ENCODE measurements at regions of chr1 and their contacts with region 1.

Region 1: DNA sequence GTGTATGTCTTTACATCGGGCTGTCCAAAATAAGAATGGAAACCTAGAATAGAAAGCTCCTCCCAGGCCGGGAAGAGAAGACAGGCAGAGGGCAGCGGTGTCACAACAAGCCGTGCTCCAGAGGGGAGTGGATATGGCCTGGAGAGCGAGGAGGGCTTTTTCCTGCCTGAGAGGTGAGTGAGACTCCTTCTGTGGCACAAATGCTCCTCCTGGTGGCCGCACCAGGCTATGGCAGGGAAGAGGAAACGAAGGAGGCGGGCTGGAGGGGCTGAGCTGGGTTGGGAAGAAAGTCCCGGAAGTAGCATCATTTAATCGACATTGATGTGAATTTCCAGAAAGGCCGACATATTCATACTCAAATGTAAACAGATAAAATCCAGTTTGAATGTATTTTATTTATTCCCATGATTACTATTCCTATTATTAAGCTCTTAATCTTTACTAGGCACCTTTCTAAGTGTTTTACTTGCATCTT is 54.7 kb downstream of the MEF2D start:
- DNase-seq: peak; percentile 87
- ATAC-seq: peak; percentile 93
- H3K4me3 Mint-ChIP-seq: peak overlapping the region; percentile 4
- H3K27ac Mint-ChIP-seq: no peak overlapping the region
- H3K4me1 Mint-ChIP-seq: peaks cover 20% of the 10 kb centered on the region
- H3K27me3 Mint-ChIP-seq: peaks cover 45% of the 10 kb centered on the region
- CTCF ChIP-seq: peak; percentile 99

Region 2: GRCh38 chr1:155688324-155689080 is 757.3 kb before region 1 on chr1 and contains the start of gene YY1AP1:
- CTCF ChIA-PET with region 1: no interaction called
- POLR2A ChIA-PET with region 1: no interaction called
- intact Hi-C with region 1: no loop called
- DNase-seq: peak; percentile 90
- ATAC-seq: peak; percentile 83
- H3K4me3 Mint-ChIP-seq: peak within 1 kb of the TSS; percentile 98
- H3K27ac Mint-ChIP-seq: peak within 1 kb of the TSS; percentile 98
- H3K4me1 Mint-ChIP-seq: peaks cover 61% of the 10 kb centered on the region
- H3K27me3 Mint-ChIP-seq: no peaks in the 10 kb centered on the region
- CTCF ChIP-seq: no peak
- total RNA-seq, gene YY1AP1: 56.2 to 60.5 TPM

Region 3: DNA sequence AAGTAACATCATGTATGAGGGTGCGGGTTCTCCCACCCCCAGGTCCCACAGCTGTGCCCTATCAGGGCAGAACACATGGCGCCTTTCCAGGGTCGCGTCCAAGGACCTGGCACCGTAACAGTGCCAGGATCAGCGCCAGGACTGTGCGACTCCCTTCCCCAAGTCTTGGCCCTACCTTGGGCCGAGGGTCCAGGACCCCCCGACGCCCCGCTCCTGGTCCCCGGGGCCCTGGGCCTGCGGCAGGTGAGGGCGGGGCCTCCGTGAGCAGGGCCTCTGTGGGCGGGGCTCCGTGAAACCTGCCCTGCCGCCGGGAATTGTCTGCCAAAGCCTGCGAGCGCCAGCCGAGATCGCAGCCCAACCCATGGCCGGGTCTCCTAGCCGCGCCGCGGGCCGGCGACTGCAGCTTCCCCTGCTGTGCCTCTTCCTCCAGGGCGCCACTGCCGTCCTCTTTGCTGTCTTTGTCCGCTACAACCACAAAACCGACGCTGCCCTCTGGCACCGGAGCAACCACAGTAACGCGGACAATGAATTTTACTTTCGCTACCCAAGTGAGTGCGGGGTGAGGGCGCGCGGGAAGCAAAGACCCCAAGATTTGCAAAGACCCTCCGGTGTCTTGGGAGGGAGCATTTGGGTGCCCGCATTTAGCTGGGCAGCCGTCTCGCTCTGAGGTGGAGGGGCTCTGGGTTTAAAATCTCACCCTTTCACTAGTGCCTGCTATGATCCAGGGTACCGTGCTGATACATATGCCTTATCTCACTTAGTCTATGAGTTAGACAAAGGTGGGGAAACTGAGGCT is 76.7 kb before region 1 on chr1 and contains the start of gene RHBG:
- CTCF ChIA-PET with region 1: interaction called, 26 read pairs
- POLR2A ChIA-PET with region 1: no interaction called
- intact Hi-C with region 1: no loop called
- DNase-seq: peak; percentile 19
- ATAC-seq: peak; percentile 45
- H3K4me3 Mint-ChIP-seq: peak within 1 kb of the TSS; percentile 7
- H3K27ac Mint-ChIP-seq: no peak within 1 kb of the TSS
- H3K4me1 Mint-ChIP-seq: peaks cover 2% of the 10 kb centered on the region
- H3K27me3 Mint-ChIP-seq: peaks cover 48% of the 10 kb centered on the region
- CTCF ChIP-seq: no peak
- total RNA-seq, gene RHBG: not detected

Region 4: GRCh38 chr1:156407344-156407743 is 38.5 kb before region 1 on chr1:
- CTCF ChIA-PET with region 1: interaction called, 11 read pairs
- POLR2A ChIA-PET with region 1: no interaction called
- intact Hi-C with region 1: no loop called
- DNase-seq: no peak
- ATAC-seq: no peak
- H3K4me3 Mint-ChIP-seq: no peak overlapping the region
- H3K27ac Mint-ChIP-seq: no peak overlapping the region
- H3K4me1 Mint-ChIP-seq: no peaks in the 10 kb centered on the region
- H3K27me3 Mint-ChIP-seq: peaks cover 29% of the 10 kb centered on the region
- CTCF ChIP-seq: no peak

Region 5: DNA sequence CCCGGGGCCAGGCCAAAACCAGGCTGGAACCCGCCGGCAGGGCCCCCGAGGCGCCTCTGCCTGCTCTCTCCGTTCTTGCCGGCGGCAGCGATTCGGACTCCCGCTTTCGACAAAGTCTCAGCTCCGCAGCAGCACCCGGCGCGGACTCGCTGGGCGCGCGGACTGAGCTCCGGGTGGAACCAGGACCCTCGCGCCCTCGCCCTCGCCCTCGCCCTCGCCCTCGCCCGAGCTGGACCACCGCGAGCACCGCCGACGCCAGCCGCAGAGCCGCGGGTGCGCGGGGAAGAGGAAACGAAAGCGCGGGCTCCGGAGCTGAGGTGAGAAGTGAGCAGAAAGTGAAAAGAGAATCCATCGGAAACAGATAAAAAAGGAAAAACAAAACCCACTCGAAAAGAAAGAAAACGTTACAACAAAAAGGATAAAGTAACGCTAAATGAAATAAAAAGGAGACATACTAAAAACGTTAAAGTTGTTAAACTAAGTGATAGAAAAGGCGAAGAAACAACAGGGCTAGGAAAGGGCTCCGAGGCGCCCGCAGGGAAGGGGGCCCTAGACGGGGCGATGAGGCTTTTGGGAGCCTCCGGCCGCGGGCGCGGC is 10.2 kb before region 1 on chr1:
- CTCF ChIA-PET with region 1: interaction called, 59 read pairs
- POLR2A ChIA-PET with region 1: interaction called, 3 read pairs
- intact Hi-C with region 1: no loop called
- DNase-seq: no peak
- ATAC-seq: no peak
- H3K4me3 Mint-ChIP-seq: peak overlapping the region; percentile 69
- H3K27ac Mint-ChIP-seq: peak overlapping the region; percentile 52
- H3K4me1 Mint-ChIP-seq: peaks cover 52% of the 10 kb centered on the region
- H3K27me3 Mint-ChIP-seq: peaks cover 79% of the 10 kb centered on the region
- CTCF ChIP-seq: no peak

Region 6: GRCh38 chr1:156500797-156501499 is 55.1 kb after region 1 on chr1:
- CTCF ChIA-PET with region 1: interaction called, 11 read pairs
- POLR2A ChIA-PET with region 1: no interaction called
- intact Hi-C with region 1: no loop called
- DNase-seq: peak; percentile 94
- ATAC-seq: peak; percentile 71
- H3K4me3 Mint-ChIP-seq: peak overlapping the region; percentile 79
- H3K27ac Mint-ChIP-seq: peak overlapping the region; percentile 95
- H3K4me1 Mint-ChIP-seq: peaks cover 74% of the 10 kb centered on the region
- H3K27me3 Mint-ChIP-seq: no peaks in the 10 kb centered on the region
- CTCF ChIP-seq: peak; percentile 55

Region 7: GRCh38 chr1:156533568-156534215 is 87.9 kb after region 1 on chr1:
- CTCF ChIA-PET with region 1: no interaction called
- POLR2A ChIA-PET with region 1: no interaction called
- intact Hi-C with region 1: no loop called
- DNase-seq: no peak
- ATAC-seq: no peak
- H3K4me3 Mint-ChIP-seq: no peak overlapping the region
- H3K27ac Mint-ChIP-seq: no peak overlapping the region
- H3K4me1 Mint-ChIP-seq: peaks cover 4% of the 10 kb centered on the region
- H3K27me3 Mint-ChIP-seq: no peaks in the 10 kb centered on the region
- CTCF ChIP-seq: no peak

Region 8: DNA sequence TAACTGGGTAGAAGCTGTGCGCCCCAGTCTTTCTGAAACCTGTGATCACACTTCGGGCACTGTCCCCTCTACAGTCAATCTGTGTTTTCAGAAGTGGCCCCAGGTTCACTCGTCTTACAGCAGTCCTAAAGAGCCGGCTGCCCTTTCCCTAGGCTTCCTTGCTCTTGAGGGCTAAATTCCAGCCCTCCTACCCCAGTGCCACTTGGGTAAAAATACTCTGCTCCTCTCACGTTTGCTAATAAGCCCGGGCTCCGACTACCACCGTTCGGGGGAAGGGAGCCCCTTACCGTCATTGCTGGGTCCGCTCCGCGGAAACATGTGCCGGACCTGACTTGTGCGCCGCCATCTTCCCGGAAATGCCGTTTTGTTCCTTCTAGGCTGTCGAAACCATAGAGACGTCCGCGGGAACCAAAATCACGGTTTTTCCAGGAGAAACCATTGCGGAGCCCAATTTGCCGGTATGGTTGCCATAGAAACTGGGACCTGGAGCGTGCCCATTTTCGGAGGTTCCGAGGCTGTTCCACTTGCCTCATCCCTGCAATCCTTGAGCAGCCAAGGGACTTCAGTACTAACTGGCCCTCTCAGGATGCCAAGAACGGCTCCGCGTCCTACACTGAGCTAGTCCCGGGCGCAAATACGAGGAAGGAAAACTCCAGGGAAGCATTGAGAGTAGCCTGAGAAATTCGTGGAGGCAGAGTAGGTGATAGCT is 155.4 kb after region 1 on chr1 and contains the start of gene GPATCH4:
- CTCF ChIA-PET with region 1: interaction called, 14 read pairs
- POLR2A ChIA-PET with region 1: no interaction called
- intact Hi-C with region 1: no loop called
- DNase-seq: peak; percentile 91
- ATAC-seq: peak; percentile 77
- H3K4me3 Mint-ChIP-seq: peak within 1 kb of the TSS; percentile 93
- H3K27ac Mint-ChIP-seq: peak within 1 kb of the TSS; percentile 97
- H3K4me1 Mint-ChIP-seq: peaks cover 32% of the 10 kb centered on the region
- H3K27me3 Mint-ChIP-seq: no peaks in the 10 kb centered on the region
- CTCF ChIP-seq: no peak
- total RNA-seq, gene GPATCH4: 50.7 to 51.0 TPM

Region 9: GRCh38 chr1:156833603-156834002 is 387.8 kb after region 1 on chr1:
- CTCF ChIA-PET with region 1: no interaction called
- POLR2A ChIA-PET with region 1: no interaction called
- intact Hi-C with region 1: no loop called
- DNase-seq: peak; percentile 66
- ATAC-seq: peak; percentile 70
- H3K4me3 Mint-ChIP-seq: no peak overlapping the region
- H3K27ac Mint-ChIP-seq: no peak overlapping the region
- H3K4me1 Mint-ChIP-seq: peaks cover 40% of the 10 kb centered on the region
- H3K27me3 Mint-ChIP-seq: peaks cover 12% of the 10 kb centered on the region
- CTCF ChIP-seq: no peak

Measured in activated CD8-positive, alpha-beta T cell treated with anti-CD3 and anti-CD28 coated beads for 36 hours (primary cell).